H1 (cell line): ENCODE measurements at regions of chr12 and their contacts with region 1.

Region 1: GRCh38 chr12:51391283-51392162 is at the start of gene GALNT6:
- DNase-seq: peak; percentile 78 to 92
- H3K4me3 ChIP-seq: peak within 1 kb of the TSS; percentile 68 to 88 (median 82)
- H3K27ac ChIP-seq: peak within 1 kb of the TSS; percentile 68; the same call in 1 of the 2 replicates
- H3K4me1 ChIP-seq: peaks cover 8 to 19% (median 9%) of the 10 kb centered on the region in 4 experiments
- H3K27me3 ChIP-seq: no peaks in the 10 kb centered on the region
- CTCF ChIP-seq: no peak
- EP300 ChIP-seq: no peak
- POLR2A ChIP-seq: peak; percentile 25 to 37
- RAD21 ChIP-seq: no peak
- total RNA-seq, gene GALNT6: 10.7 and 12.5 TPM in 2 replicates

Region 2: GRCh38 chr12:51238510-51239334 is 152.8 kb before region 1 on chr12 and contains the start of gene DAZAP2:
- CTCF ChIA-PET with region 1: no interaction called
- POLR2A ChIA-PET with region 1: no interaction called
- DNase-seq: peak; percentile 89 to 92
- H3K4me3 ChIP-seq: peak within 1 kb of the TSS; percentile 90 to 100 (median 99)
- H3K27ac ChIP-seq: peak within 1 kb of the TSS; percentile 99
- H3K4me1 ChIP-seq: peaks cover 0 to 9% (median 5%) of the 10 kb centered on the region in 4 experiments; a peak in 6 of 7 replicates
- H3K27me3 ChIP-seq: no peaks in the 10 kb centered on the region
- CTCF ChIP-seq: peak in 1 of 3 experiments; percentile 7; a peak in 1 of 4 replicates
- EP300 ChIP-seq: peak in 1 of 2 experiments; percentile 32; a peak in 1 of 3 replicates
- POLR2A ChIP-seq: peak; percentile 69 to 92
- RAD21 ChIP-seq: no peak
- total RNA-seq, gene DAZAP2: 24.9 and 27.1 TPM in 2 replicates

Region 3: DNA sequence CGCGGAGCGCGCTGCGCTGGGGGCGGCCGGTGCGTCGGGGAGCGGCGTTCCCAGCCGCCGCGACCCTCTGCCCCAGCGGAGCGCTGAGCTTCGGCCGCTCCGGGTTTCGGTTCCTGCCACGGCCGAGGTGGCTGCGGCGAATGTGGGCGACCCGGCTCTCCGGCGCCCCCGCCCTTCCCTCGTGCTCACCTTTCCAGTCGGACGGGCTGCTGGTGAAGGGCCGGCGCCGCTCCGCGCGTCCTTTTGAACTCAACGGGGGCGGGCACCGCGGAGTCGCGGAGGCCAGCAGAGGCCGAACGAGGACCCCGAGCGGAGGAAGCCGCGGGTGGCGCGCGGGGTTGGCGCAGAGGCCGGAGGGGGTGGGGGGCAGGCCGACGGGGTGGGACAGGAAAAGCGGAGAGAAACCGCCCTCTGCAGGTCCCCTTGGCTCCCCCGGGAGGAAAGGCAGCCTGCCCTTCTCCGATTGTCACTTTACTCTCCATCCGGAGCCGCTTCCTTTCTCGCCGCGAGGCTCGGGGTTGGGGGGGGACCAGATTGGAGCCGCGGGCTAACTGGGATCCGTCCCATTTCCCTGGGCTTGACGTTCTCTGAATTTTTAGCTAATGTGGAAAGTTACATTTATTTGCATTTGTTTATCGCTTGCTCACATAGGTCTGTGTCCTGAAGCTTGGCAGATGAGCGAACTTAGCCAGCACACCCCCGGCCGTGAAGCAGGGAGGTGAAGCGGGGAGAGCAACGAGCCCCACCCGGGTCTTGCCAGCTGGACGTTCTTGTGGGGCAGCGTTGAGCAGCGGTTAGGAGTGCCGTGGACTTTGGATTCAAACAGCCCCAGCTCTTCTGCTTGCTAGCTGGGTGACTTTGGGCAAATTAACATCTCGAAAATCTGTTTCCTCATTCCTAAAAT is 121.2 kb before region 1 on chr12 and contains the start of gene SMAGP:
- CTCF ChIA-PET with region 1: no interaction called
- POLR2A ChIA-PET with region 1: interaction called, 10 read pairs
- DNase-seq: peak in 1 of 2 experiments; percentile 89
- H3K4me3 ChIP-seq: peak within 1 kb of the TSS; percentile 42 to 84 (median 62)
- H3K27ac ChIP-seq: no peak within 1 kb of the TSS; the same call in 1 of the 2 replicates
- H3K4me1 ChIP-seq: peaks cover 0 to 6% (median 2%) of the 10 kb centered on the region in 4 experiments; a peak in 5 of 7 replicates
- H3K27me3 ChIP-seq: peaks cover 0 to 11% (median 8%) of the 10 kb centered on the region in 4 experiments; a peak in 6 of 7 replicates
- CTCF ChIP-seq: no peak
- EP300 ChIP-seq: 0 out of 3 replicates have a peak, but pooled peaks of 1 of the 2 experiments have one; percentile 13
- POLR2A ChIP-seq: peak; percentile 43 to 63
- RAD21 ChIP-seq: no peak; a peak in 2 of 4 replicates
- total RNA-seq, gene SMAGP: 9.2 and 9.4 TPM in 2 replicates

Region 4: GRCh38 chr12:51381226-51382079 is 10.1 kb before region 1 on chr12:
- CTCF ChIA-PET with region 1: interaction called, 8 read pairs
- POLR2A ChIA-PET with region 1: interaction called, 11 read pairs
- DNase-seq: no peak
- H3K4me3 ChIP-seq: no peak overlapping the region
- H3K27ac ChIP-seq: no peak overlapping the region
- H3K4me1 ChIP-seq: peaks cover 3 to 14% (median 7%) of the 10 kb centered on the region in 4 experiments
- H3K27me3 ChIP-seq: no peaks in the 10 kb centered on the region
- CTCF ChIP-seq: no peak
- EP300 ChIP-seq: no peak
- POLR2A ChIP-seq: no peak
- RAD21 ChIP-seq: no peak

Region 5: DNA sequence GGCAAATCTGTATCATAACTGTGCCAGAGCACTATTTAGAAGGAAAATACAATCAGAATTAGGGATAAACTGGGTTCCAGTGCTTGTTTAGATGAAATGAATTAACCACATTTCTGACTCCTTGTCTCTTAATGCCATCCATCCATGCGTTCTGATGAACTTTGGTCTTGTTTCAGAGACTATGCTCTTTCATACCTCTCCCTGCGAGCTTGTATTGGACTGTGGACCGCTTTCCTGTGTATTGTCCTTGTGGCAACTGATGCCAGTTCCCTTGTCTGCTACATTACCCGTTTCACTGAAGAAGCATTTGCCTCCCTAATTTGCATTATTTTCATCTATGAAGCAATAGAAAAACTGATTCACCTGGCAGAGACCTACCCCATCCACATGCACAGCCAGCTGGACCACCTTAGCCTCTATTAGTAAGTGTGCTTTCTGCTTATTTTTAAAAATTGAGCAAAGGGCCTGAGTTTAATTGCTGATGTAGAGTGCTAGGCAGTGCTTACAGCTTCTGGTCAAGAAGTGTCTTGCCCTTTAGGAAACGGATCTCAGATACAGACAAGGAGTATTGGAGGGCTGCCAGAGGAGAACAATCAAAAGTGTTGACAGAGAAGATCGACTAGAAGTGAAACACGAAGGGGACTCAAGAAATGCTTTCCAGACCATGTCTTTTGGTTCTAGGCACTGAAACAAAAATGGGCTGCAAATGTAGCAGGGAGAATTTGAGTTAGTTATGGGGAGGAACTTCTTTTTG is 79.8 kb after region 1 on chr12:
- CTCF ChIA-PET with region 1: no interaction called
- POLR2A ChIA-PET with region 1: no interaction called
- DNase-seq: no peak
- H3K4me3 ChIP-seq: no peak overlapping the region
- H3K27ac ChIP-seq: no peak overlapping the region
- H3K4me1 ChIP-seq: no peaks in the 10 kb centered on the region
- H3K27me3 ChIP-seq: no peaks in the 10 kb centered on the region
- CTCF ChIP-seq: no peak
- EP300 ChIP-seq: no peak
- POLR2A ChIP-seq: no peak
- RAD21 ChIP-seq: no peak